ENCODE measurements at regions of chr22 and their contacts with region 1.

Region 1: DNA sequence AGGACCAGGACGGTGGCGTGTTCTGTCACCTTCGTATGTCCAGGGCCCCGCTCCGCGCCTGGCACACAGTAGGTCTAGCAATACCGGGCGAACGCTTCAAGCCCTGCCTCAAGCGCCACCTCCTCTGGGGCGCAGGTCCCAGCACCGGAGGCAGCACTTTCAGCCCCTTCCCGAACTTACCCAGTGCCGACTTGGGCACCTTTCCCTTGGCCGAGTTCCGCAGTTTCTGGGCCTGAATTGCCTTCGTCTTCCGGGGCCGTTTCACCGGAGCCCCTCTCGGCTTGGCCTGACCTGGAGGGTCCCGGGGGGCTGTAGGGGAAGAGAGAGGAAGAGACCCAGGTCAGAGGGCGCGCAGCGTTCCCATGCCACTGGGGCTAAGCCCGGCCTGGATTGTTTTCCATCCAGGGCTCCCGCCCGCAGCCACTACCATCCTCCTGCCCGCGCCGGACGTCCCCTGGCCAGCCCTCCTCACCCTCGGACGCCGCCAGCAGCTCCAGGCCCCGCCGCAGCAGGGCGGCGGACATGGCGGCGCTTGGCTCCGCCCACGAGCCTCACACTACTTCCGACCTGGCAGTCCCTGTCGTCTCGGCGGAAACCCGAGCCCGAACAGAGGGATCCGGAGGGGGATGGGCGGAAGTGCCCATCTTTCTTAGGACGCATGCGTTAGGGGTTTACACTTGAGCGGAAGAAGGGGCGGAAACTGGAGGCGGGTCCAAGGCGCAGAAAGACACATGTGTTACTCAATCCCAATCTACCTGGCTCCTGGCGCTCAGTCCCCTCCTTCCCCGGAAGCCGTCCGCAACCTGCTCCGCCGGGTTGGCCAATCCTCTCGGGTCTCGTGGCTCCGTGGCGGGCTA is at the start of gene RPS19BP1:
- DNase-seq: peak; percentile 99 to 100
- ATAC-seq: peak; percentile 90 to 91 (median 90)
- H3K4me3 ChIP-seq: peak within 1 kb of the TSS; percentile 99
- H3K27ac ChIP-seq: peak within 1 kb of the TSS; percentile 97
- H3K4me1 ChIP-seq: peaks cover 42% of the 10 kb centered on the region
- H3K27me3 ChIP-seq: no peaks in the 10 kb centered on the region
- CTCF ChIP-seq: no peak
- total RNA-seq, gene RPS19BP1: 34.0 to 52.6 (median 42.6) TPM

Region 2: GRCh38 chr22:39170825-39171622 is 361.4 kb before region 1 on chr22:
- intact Hi-C with region 1: loop called in 1 of 2 experiments (anchors 5 kb)
- DNase-seq: peak; percentile 87 to 93
- ATAC-seq: peak; percentile 87 to 95 (median 90)
- H3K4me3 ChIP-seq: no peak overlapping the region
- H3K27ac ChIP-seq: no peak overlapping the region
- H3K4me1 ChIP-seq: peaks cover 47% of the 10 kb centered on the region
- H3K27me3 ChIP-seq: no peaks in the 10 kb centered on the region
- CTCF ChIP-seq: peak; percentile 96

Region 3: DNA sequence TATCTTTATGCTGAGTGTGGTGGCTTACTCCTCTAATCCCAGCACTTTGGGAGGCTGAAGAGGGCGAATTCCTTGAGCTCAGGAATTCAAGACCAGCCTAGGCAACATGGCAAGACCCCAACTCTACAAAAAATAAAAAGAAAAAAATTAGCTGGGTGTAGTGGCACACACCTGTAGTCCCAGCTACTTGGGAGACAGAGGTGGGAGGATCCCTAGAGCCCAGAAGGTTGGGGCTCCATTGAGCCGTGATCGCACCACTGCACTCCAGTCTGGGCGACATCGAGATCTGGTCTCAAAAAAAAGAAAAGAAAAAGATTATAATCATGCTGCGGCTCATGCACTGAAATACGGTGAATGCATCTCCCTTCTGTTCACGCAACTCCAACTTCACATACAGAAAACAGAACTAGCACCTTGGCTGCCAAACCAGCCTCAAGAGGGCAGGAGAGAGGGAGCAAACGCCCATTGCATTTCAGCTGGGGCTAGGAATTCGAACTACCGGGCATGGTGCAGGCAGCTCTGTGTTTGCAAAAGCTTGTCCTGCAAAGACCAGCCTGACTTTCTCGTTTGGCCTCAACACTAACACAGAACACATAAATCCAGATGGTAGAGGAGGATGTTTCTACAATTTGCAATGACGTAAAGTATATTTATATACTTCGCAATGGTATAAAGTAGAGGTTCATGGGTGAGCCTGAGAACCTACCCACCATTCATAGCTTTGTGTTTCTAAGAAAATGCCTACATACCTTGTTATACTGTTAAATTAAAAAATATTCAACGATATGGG is 189.0 kb before region 1 on chr22:
- intact Hi-C with region 1: loop called in 1 of 2 experiments (anchors 5 kb)
- DNase-seq: peak in 1 of 2 donors; percentile 70
- ATAC-seq: peak; percentile 68 to 90 (median 86)
- H3K4me3 ChIP-seq: no peak overlapping the region
- H3K27ac ChIP-seq: no peak overlapping the region
- H3K4me1 ChIP-seq: no peaks in the 10 kb centered on the region
- H3K27me3 ChIP-seq: peaks cover 0 to 3% (median 0%) of the 10 kb centered on the region in 3 donors
- CTCF ChIP-seq: peak; percentile 67

Region 4: DNA sequence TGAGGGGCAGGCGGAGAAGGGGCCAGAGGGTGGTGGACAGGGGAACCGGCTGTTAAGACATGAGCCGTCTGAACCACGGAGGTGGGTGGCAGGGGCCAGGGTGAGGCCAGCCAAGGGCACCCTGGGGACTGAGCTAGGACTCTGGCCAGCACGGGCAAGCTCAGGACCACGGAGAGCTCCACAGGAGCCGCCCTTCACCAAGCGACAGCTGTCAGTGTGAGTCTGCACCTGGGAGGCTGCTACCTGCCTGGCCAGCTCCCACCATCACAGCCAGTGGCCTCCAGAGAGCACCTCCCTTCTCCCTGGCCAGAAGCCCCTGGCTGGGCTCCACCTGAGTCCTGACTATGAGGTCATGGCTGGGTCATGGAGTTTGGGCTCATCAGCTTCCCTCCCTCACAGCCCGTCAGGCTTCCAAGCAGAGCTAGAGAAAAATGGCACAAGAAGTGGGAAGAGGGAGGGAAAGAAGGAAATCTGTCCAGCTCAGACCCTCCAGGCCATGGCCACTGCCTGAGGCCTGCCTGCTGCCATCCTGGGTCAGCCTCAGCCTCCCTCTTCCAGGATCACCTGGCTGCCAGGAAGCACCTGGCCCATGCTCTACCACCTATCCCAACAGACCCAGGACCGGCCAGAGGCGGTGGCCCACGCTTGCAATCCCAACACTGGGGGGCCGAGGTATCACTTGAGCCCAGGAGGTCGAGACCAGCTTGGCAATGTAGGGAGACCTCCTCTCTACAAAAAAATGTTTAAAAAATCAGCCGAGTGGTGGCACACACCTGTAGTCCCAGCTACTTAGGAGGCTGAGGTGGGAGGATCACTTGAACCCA is 53.8 kb before region 1 on chr22:
- intact Hi-C with region 1: no loop called
- DNase-seq: peak in 1 of 2 donors; percentile 55
- ATAC-seq: peak in 3 of 4 donors; percentile 32 to 51 (median 39)
- H3K4me3 ChIP-seq: no peak overlapping the region
- H3K27ac ChIP-seq: no peak overlapping the region
- H3K4me1 ChIP-seq: no peaks in the 10 kb centered on the region
- H3K27me3 ChIP-seq: no peaks in the 10 kb centered on the region
- CTCF ChIP-seq: no peak

Region 5: DNA sequence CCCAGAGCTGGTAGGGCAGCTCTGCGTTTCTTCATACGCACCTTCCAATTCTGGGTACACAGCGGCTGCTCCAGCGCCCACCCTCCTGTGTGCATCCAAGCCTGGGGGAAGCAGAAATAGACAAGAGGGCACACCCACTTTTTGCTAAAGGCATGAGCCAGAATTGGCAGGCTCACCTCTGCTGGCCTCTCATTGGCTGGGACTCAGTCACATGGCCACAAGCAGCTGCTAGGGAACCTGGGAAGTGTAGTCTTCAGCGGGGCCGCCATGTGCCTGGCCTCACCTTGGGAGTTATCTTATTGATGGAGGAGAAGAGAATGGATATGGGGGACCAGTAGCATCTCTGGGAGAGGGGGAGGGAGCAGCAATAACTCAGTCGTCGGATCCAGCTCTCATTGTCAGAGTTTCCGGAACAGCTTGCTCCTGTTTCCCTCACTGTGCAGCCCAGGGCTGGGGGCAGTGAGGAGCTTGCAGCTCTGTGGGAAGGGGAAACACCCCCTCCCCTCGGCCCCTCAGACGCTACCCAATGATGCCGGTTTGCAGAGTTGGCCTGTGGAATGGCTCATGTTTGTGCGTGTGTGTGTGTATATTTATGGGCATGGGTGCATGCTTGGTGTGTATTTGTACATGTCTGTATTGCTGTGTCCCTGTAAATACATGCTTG is 42.2 kb before region 1 on chr22:
- intact Hi-C with region 1: loop called (anchors 5 kb)
- DNase-seq: peak; percentile 83 to 91
- ATAC-seq: peak; percentile 95 to 99 (median 97)
- H3K4me3 ChIP-seq: no peak overlapping the region
- H3K27ac ChIP-seq: no peak overlapping the region
- H3K4me1 ChIP-seq: no peaks in the 10 kb centered on the region
- H3K27me3 ChIP-seq: no peaks in the 10 kb centered on the region
- CTCF ChIP-seq: no peak

Region 6: GRCh38 chr22:39574779-39575551 is 42.5 kb after region 1 on chr22:
- intact Hi-C with region 1: no loop called
- DNase-seq: peak in 1 of 2 donors; percentile 39
- ATAC-seq: no peak
- H3K4me3 ChIP-seq: no peak overlapping the region
- H3K27ac ChIP-seq: no peak overlapping the region
- H3K4me1 ChIP-seq: no peaks in the 10 kb centered on the region
- H3K27me3 ChIP-seq: peaks cover 0 to 28% (median 6%) of the 10 kb centered on the region in 3 donors
- CTCF ChIP-seq: no peak

Region 7: DNA sequence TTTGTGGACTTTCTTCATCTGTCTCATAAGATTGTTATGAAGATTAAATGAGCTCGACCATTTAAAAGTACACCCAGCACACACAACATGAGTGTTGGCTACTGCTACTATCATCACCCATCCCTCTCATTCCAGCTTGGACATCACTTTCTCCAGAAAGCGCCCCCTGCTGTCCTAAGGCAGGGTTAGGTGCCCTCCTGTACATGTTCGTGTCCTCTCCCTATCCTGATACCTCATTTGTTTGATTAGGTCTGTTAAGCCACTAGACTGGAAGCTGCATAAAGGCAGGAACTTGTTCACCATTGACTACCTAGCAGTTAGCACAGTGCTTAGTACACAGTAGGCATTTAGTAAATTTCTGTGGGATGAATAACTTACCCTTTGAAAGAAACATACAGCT is 275.6 kb after region 1 on chr22:
- intact Hi-C with region 1: loop called in 1 of 2 experiments (anchors 5 kb)
- DNase-seq: no peak
- ATAC-seq: peak in 2 of 4 donors; percentile 54 to 65
- H3K4me3 ChIP-seq: no peak overlapping the region
- H3K27ac ChIP-seq: no peak overlapping the region
- H3K4me1 ChIP-seq: no peaks in the 10 kb centered on the region
- H3K27me3 ChIP-seq: peaks cover 0 to 37% (median 5%) of the 10 kb centered on the region in 3 donors
- CTCF ChIP-seq: peak; percentile 29

Region 8: DNA sequence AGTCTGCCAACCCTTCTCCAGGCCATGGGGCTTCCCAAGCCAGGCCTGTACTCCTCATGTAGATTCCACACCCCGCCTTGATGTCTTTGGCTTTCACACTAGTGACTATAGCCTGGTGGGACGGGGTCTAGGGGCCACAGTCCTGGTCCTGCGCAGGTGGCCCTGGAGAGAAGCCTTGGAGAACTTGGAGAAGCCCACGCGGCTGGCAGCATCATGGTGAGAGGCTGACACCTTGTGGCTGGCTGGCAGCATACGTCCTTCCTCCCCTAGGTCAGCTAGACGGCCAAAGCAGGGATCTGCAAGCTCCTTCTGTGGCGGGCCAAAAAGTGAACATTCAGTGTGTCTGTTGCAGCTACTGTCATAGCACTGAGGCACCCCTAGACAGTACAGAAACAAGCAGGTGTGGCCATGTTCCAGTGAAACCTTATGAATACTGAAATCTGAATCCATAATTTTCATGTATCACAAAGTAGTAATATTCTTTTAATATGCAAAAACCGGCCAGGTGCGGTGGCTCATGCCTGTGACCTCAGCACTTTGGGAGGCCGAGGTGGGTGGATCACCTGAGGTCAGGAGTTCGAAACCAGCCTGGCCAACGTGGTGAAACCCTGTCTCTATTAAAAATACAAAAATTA is 504.3 kb after region 1 on chr22:
- intact Hi-C with region 1: loop called in 1 of 2 experiments (anchors 2 kb)
- DNase-seq: peak; percentile 54 to 77
- ATAC-seq: peak; percentile 79 to 88 (median 83)
- H3K4me3 ChIP-seq: no peak overlapping the region
- H3K27ac ChIP-seq: no peak overlapping the region
- H3K4me1 ChIP-seq: peaks cover 16% of the 10 kb centered on the region
- H3K27me3 ChIP-seq: no peaks in the 10 kb centered on the region
- CTCF ChIP-seq: peak; percentile 63

Measured in psoas muscle (tissue), 8 donors.